ENCODE measurements at regions of chr1 and their contacts with region 1.

Region 1: DNA sequence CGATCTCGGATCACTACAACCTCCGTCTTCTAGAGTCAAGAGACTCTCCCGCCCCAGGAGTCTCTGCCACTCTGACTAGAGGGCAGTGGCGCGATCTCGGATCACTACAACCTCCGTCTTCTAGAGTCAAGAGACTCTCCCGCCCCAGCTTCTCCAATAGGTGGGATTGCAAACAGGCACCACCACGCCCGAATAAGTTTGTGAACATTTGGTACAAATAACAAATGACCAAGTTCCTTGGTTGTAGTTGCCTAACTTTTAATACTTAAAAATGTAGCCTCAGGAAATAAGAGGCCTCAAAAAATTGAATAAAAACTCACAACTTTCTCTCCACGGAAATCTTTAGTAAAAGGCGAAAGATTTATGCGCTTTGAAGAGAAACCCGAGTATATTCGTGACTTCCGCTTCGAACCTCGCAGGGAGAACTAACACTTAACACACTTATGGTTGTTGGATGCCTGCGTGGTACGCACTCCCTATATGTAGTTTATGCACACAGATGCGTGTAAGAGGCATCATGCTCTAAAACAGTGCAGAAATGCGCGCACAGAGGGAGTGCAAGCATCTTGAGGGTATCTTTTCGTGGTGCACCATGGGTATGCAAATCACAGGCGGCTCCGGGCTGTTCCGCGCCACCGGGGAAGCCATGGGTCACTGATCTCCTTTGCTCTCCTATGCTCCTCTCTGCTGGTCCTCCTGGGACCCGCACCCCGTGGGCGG is 11.4 kb downstream of the BTBD19 start:
- DNase-seq: peak; percentile 91
- CTCF ChIP-seq: peak; percentile 8

Region 2: DNA sequence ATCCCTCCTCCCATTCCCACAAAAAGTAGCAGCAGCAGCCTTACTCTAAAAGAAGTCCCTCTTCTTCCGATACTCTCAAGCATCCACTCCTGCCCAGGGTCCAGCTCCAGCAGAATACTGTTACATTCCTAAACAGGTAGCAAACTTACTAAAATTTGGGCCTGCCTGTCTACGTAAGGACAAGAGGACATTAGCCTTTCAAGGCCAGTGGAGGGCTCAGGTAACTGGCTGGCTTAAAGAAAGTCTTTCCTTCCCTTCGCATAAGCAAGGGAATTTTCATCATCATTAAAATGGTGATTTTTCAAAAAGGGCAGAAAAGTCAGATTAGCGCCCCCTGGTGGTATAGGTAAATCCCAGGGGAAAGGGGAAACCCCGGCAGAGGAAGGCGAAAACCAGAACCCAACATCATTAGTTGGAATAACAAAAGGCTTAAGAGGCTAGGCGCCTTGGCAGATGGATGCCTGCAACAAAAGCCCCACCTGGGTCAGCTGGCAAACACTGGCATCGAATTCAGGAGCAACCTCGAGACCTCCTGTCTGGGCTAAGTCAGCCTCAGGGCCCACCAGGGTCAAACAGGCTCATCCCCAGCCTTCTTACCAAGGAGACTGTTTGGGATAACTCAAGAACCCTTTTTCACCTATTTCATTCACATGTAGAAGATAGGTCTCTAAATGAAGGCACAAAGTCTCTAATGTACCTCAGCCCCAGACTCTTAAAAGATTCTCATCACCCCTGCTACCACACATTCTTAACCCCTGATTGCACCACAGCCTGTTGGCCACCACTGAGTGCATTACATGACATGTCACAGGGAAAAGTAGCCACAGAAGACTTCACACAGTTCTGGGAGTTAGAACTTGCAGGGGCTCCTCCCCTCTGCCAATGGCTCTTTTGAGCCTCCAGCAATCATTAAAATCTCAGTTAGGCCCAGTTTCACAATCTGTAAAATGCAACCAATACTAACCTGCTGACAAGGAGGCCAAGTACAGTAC is 501.4 kb before region 1 on chr1:
- CTCF ChIA-PET with region 1: no interaction called
- POLR2A ChIA-PET with region 1: no interaction called
- DNase-seq: peak; percentile 74
- CTCF ChIP-seq: peak; percentile 67

Region 3: DNA sequence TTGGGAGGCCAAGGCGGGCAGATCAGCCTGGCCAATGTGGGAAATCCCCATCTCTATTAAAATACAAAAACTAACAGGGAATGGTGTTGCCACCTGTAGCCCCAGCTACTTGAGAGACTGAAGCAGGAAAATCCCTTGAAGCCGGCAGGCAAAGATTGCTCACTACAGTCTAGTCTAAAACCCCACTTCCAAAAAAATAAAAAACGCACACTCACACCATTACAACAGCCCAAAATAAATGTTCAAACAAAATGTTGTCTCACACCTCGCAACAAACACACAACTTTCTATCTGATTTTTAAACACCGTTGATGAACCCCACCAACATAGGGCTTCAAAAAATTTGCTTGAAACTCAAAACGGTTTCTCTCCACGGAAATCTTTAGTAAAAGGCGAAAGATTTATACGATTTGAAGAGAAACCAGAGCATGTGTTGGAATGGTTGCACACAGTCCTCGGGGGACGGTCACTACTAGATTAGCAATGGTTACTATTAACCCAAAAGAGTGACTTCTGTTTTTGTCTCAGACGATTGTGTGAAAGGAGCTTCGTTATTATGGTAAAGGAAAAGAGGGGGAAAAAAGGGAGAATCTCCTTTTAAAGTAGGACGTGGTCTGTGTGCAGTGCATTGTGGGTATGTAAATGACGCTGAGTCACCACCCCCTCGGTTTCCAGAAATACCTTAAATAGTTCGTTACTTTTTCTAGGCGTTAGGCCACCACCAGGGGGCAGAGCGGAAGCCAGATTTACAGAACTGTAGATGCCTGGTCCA is 88.8 kb before region 1 on chr1 and contains the start of gene RNU5D-1:
- CTCF ChIA-PET with region 1: interaction called, 8 read pairs
- POLR2A ChIA-PET with region 1: interaction called, 29 read pairs
- DNase-seq: peak; percentile 87
- CTCF ChIP-seq: peak; percentile 81

Region 4: DNA sequence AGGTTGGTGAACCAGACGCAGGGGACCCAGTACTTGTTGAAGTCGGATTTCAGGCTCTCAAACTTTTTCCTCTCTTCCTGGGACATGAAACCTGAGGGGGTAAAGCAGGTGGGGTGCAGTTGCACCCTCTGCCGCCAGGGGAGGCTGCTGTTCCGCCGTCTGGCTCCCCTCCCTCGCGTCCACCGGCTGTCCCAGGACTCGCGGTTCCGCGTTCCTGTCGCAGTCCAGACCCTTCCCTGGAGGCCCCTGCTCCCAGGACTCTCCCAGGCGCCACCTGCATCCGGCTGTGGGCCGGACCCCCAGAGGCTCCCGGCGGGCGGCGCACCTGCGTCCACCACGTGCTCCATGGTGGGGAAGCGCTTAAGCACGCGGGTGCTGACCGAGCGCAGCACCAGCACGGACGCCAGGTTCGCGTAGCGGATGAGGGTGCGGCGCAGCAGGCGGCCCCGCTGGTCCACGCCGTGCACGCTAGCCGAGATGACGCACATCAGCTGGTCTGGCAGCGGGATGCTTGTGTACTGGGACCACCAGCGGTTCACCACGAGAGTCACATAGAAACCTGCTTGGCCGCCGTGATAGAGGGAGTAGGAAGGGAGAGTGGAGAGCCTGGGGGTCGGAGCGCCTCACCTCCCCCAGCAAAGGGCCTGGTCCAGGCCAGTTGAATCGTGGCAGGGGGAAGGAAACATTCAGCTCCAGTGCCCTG is 33.5 kb before region 1 on chr1:
- CTCF ChIA-PET with region 1: interaction called, 6 read pairs
- POLR2A ChIA-PET with region 1: interaction called, 12 read pairs
- DNase-seq: peak; percentile 80
- CTCF ChIP-seq: peak; percentile 91

Region 5: DNA sequence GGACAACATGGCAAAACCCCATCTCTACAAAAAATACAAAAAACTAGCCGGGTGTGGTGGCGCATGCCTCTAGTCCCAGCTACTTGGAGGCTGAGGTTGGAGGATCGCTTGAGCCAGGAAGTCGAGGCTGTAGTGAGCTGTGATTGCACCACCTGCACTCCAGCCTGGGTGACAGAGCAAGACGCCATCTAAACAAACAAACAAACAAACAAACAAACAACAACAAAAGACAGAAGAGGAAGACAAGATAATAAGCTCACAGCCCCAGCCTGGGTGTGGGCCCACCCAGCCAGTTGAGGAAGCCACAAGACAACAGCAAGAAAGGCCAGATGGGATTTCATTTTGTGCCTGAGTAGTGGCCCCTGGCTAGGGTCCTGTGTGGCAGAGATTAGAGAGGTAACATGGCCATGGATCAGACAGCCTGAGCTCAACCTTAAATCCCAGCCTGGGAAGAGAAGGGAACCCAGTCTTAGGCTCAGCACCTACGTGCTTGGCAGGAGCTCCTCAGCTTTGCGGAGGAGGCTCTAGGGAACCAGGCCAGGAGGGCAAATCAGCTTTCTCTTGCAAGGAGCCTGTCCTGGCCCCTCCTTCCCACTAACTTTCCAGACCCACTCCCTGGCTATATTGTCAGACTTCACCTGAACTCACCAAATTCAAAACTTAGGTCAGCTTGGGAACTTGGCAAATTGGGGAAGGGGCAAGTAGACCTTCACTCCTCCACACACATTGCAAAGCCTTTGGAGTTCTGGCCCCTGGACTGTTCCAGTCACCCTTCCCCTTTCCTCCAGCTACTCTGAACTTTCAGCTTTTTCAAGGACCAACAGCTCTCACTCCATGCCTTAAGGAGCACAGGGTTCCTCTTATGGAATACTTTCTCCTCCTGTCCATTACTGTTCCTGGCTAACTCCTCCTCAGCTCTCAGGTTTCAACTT is 26.7 kb before region 1 on chr1:
- CTCF ChIA-PET with region 1: interaction called, 20 read pairs
- POLR2A ChIA-PET with region 1: interaction called, 12 read pairs
- DNase-seq: no peak
- CTCF ChIP-seq: no peak

Region 6: DNA sequence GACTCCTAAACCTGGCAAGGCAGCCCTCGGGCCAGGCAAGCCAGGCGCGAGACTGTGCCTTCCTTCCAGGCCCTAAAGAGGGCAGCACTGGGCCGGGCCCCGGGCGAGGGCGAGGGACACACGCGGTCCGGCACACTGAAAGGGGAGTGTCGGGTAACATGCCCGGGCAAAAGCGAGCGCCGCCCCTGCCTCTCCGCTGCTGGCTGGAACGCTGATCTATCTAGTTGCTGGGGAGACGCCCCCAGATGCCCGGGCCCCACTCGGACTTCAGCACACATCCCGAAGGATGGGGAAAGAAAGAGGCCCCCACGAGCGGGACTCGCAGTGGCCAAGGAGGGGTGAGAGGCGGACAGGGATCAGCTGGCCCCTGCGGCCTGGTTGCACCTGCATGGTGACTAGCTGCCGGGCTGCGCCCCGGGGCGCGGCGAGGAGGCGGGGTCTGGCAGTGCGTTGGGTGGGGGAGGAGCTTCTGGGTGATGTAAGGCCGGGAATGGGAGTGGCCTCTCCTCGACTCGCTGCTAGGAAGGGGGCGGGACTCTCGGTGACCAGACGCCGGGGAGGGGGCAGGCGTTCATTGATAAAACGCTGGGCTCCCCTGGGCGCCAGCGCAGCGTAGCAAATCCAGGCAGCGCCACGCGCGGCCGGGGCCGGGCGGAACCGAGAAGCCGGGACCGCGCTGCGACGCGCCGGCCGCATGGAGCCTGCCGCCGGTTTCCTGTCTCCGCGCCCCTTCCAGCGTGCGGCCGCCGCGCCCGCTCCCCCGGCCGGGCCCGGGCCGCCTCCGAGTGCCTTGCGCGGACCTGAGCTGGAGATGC is 19.8 kb before region 1 on chr1 and contains the start of gene PLK3:
- CTCF ChIA-PET with region 1: interaction called, 21 read pairs
- POLR2A ChIA-PET with region 1: interaction called, 120 read pairs
- DNase-seq: peak; percentile 99
- CTCF ChIP-seq: peak; percentile 94

Region 7: GRCh38 chr1:44807262-44808062 is 12.3 kb before region 1 on chr1 and contains the start of gene DYNLT4:
- CTCF ChIA-PET with region 1: interaction called, 42 read pairs
- POLR2A ChIA-PET with region 1: interaction called, 120 read pairs
- DNase-seq: peak; percentile 74
- CTCF ChIP-seq: no peak

Region 8: GRCh38 chr1:44835738-44836675 is 16.2 kb after region 1 on chr1:
- CTCF ChIA-PET with region 1: interaction called, 19 read pairs
- POLR2A ChIA-PET with region 1: interaction called, 21 read pairs
- DNase-seq: peak; percentile 88
- CTCF ChIP-seq: peak; percentile 84